ENCODE measurements at regions of chr11 and their contacts with region 1.

Region 1: DNA sequence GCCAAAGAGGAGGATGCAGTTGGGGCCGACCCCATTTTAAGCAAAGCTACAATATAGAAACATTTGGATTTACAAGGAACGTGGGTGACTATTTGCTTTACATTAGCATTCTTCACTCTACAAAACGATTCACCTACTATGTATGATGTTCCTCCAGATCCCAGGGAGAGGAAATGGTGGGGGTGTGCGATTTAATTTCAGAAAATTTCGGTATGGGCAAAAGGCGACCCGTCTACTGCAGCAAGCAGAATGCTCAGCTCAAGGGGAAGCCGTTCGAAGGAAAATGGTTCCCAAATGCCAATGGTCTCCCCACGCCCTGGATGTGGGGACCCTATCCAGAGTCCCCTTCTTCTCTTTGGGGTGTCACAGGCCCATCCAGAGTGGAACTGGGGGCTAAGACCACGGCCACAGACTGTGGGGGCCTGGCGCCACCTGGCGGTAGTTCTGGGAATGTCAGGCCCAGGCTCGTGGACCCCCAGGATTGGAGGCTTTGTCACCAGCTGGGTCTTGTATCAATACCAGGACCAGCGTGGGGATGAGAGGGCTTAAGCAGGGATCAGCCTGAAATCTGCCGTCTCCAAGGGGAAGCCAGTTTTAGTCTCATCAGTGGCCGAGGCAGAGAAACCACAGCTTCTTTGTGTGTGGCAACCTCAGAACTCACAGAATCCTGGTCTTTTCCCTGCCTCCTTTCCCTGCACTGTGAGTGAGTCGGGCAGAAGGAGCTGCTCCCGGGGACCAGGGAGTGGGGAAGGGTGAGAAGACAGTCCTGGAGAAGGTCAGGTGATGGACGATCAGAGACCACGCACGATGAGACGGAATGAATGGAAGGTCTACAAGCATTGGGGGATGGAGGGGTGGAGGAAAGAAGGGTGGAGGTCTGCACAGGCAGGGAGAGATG is 8.4 kb downstream of the LRRC10B start:
- DNase-seq: peak; percentile 39 to 79 (median 63)
- ATAC-seq: peak; percentile 83
- H3K4me3 ChIP-seq: peak overlapping the region; percentile 12 to 32
- H3K4me3 Mint-ChIP-seq: peak overlapping the region; percentile 70
- H3K27ac ChIP-seq: no peak overlapping the region
- H3K27ac Mint-ChIP-seq: no peak overlapping the region
- H3K4me1 ChIP-seq: peaks cover 10% of the 10 kb centered on the region
- H3K4me1 Mint-ChIP-seq: peaks cover 9% of the 10 kb centered on the region
- H3K27me3 ChIP-seq: no peaks in the 10 kb centered on the region
- H3K27me3 Mint-ChIP-seq: peaks cover 27% of the 10 kb centered on the region
- CTCF ChIP-seq: peak; percentile 99

Region 2: GRCh38 chr11:61446211-61446651 is 70.7 kb before region 1 on chr11:
- CTCF ChIA-PET with region 1: interaction called, 20 read pairs
- POLR2A ChIA-PET with region 1: interaction called, 3 read pairs
- intact Hi-C with region 1: loop called in 1 of 2 experiments (anchors 1 kb)
- DNase-seq: peak; percentile 35 to 74 (median 62)
- ATAC-seq: peak; percentile 93
- H3K4me3 ChIP-seq: no peak overlapping the region
- H3K4me3 Mint-ChIP-seq: no peak overlapping the region
- H3K27ac ChIP-seq: no peak overlapping the region
- H3K27ac Mint-ChIP-seq: no peak overlapping the region
- H3K4me1 ChIP-seq: no peaks in the 10 kb centered on the region
- H3K4me1 Mint-ChIP-seq: peaks cover 17% of the 10 kb centered on the region
- H3K27me3 ChIP-seq: no peaks in the 10 kb centered on the region
- H3K27me3 Mint-ChIP-seq: no peaks in the 10 kb centered on the region
- CTCF ChIP-seq: peak; percentile 45

Region 3: GRCh38 chr11:61477727-61478148 is 39.2 kb before region 1 on chr11:
- CTCF ChIA-PET with region 1: interaction called, 69 read pairs
- POLR2A ChIA-PET with region 1: no interaction called
- intact Hi-C with region 1: loop called (anchors 1 kb)
- DNase-seq: peak; percentile 21 to 71 (median 59)
- ATAC-seq: peak; percentile 49
- H3K4me3 ChIP-seq: no peak overlapping the region
- H3K4me3 Mint-ChIP-seq: no peak overlapping the region
- H3K27ac ChIP-seq: no peak overlapping the region
- H3K27ac Mint-ChIP-seq: no peak overlapping the region
- H3K4me1 ChIP-seq: peaks cover 8% of the 10 kb centered on the region
- H3K4me1 Mint-ChIP-seq: peaks cover 8% of the 10 kb centered on the region
- H3K27me3 ChIP-seq: peaks cover 0 to 2% of the 10 kb centered on the region in 2 experiments
- H3K27me3 Mint-ChIP-seq: peaks cover 4% of the 10 kb centered on the region
- CTCF ChIP-seq: peak; percentile 78

Region 4: GRCh38 chr11:61488651-61489291 is 28.2 kb before region 1 on chr11:
- CTCF ChIA-PET with region 1: interaction called, 16 read pairs
- POLR2A ChIA-PET with region 1: no interaction called
- intact Hi-C with region 1: no loop called
- DNase-seq: no peak
- ATAC-seq: no peak
- H3K4me3 ChIP-seq: no peak overlapping the region
- H3K4me3 Mint-ChIP-seq: no peak overlapping the region
- H3K27ac ChIP-seq: no peak overlapping the region
- H3K27ac Mint-ChIP-seq: no peak overlapping the region
- H3K4me1 ChIP-seq: no peaks in the 10 kb centered on the region
- H3K4me1 Mint-ChIP-seq: no peaks in the 10 kb centered on the region
- H3K27me3 ChIP-seq: no peaks in the 10 kb centered on the region
- H3K27me3 Mint-ChIP-seq: no peaks in the 10 kb centered on the region
- CTCF ChIP-seq: no peak

Region 5: GRCh38 chr11:61503212-61503770 is 13.6 kb before region 1 on chr11:
- CTCF ChIA-PET with region 1: interaction called, 12 read pairs
- POLR2A ChIA-PET with region 1: no interaction called
- intact Hi-C with region 1: no loop called
- DNase-seq: no peak
- ATAC-seq: no peak
- H3K4me3 ChIP-seq: no peak overlapping the region
- H3K4me3 Mint-ChIP-seq: no peak overlapping the region
- H3K27ac ChIP-seq: no peak overlapping the region
- H3K27ac Mint-ChIP-seq: no peak overlapping the region
- H3K4me1 ChIP-seq: peaks cover 4% of the 10 kb centered on the region
- H3K4me1 Mint-ChIP-seq: peaks cover 6% of the 10 kb centered on the region
- H3K27me3 ChIP-seq: peaks cover 10% of the 10 kb centered on the region in 2 experiments
- H3K27me3 Mint-ChIP-seq: peaks cover 28% of the 10 kb centered on the region
- CTCF ChIP-seq: no peak

Region 6: DNA sequence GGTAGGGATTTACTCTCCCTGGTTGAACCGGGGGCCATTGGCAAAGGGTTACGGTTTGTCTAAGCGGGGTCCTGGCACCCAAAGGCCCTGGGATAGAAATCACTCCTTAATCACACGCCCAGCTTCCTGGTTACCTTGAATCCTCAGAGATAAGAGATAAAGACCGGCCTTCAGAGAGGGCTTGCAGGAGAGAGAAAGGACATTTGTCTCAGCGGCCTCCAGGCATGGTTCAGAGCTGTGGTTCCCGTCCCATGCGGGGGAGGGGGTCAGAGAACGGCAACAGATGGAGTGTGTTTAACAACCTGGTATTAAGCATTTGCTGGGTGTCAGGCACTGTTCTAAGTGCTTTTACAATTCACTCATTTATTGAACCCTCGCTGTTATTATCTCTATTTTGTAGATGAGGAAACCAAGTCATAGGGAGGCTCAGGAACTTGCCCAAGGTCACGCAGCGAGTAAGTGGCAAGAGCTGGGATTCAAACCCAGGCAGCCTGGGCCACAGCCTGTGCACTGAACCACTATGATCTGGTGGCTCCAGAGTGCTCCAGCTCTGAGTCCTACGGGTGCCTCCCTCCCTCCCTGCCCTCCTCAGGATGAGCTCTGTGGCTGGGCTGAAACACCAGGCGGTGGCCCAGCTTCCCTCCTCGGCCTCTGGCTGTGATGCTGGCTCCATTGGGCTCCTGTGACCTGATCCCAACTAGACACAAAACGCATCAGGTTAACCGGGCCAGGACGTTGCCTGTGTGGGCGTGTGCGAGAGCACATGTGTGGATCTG is 10.2 kb after region 1 on chr11:
- CTCF ChIA-PET with region 1: interaction called, 42 read pairs
- POLR2A ChIA-PET with region 1: no interaction called
- intact Hi-C with region 1: no loop called
- DNase-seq: no peak
- ATAC-seq: no peak
- H3K4me3 ChIP-seq: no peak overlapping the region
- H3K4me3 Mint-ChIP-seq: no peak overlapping the region
- H3K27ac ChIP-seq: no peak overlapping the region
- H3K27ac Mint-ChIP-seq: no peak overlapping the region
- H3K4me1 ChIP-seq: no peaks in the 10 kb centered on the region
- H3K4me1 Mint-ChIP-seq: no peaks in the 10 kb centered on the region
- H3K27me3 ChIP-seq: no peaks in the 10 kb centered on the region
- H3K27me3 Mint-ChIP-seq: peaks cover 25% of the 10 kb centered on the region
- CTCF ChIP-seq: no peak

Region 7: DNA sequence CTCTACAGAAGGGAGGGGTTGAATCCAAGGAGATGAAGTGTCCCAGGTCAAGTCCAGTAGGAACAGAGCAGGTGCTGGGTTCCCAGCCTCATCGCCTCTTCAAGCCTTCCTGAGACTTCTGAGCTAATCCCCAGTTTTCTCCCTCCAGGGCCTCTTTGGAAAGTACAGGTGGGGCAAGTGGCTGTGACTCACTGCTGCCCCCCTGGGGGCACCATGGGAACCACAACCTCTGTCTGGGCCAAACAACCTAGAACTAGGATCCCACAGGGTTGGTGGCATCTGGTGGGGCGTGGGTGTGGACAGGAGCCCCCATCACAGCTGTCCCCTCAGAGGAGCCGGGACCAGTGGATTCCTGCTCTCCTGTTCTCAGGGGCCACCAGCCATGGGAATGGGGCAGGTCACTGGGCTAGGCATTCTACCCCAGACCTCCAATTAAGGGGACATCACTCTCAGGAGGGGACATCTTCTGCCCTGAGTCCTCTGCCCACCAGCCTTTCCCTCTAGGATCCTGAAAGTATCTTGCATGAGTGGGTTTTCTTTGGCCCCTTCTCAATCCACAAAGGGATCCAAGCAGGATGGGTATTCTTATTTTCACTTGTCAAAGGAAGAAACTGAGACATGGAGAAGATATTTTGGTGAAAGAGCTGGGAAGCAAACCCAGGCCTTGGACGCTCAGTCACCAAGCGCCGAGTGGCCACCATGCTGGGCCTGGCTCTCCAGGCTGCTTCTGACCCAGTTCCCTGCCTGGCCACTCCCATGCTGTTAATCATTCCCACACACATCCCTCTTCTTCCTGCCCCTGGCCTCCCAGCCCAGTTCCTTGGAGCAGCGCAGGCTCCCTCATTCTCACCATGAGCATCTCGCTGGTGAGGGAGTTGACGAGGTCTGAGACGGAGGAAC is 15.5 kb after region 1 on chr11:
- CTCF ChIA-PET with region 1: interaction called, 42 read pairs
- POLR2A ChIA-PET with region 1: no interaction called
- intact Hi-C with region 1: no loop called
- DNase-seq: peak in 7 of 9 experiments; percentile 26 to 58 (median 38)
- ATAC-seq: peak; percentile 55
- H3K4me3 ChIP-seq: no peak overlapping the region
- H3K4me3 Mint-ChIP-seq: no peak overlapping the region
- H3K27ac ChIP-seq: no peak overlapping the region
- H3K27ac Mint-ChIP-seq: no peak overlapping the region
- H3K4me1 ChIP-seq: no peaks in the 10 kb centered on the region
- H3K4me1 Mint-ChIP-seq: no peaks in the 10 kb centered on the region
- H3K27me3 ChIP-seq: no peaks in the 10 kb centered on the region
- H3K27me3 Mint-ChIP-seq: peaks cover 28% of the 10 kb centered on the region
- CTCF ChIP-seq: peak; percentile 68